Naive thymus-derived CD4-positive, alpha-beta T cell (primary cell): ENCODE measurements at regions of chr1 and their contacts with region 1.

Region 1: GRCh38 chr1:155466996-155467395 is 95.6 kb downstream of the ASH1L start:
- DNase-seq: no peak
- ATAC-seq: no peak
- H3K4me3 ChIP-seq: no peak overlapping the region
- H3K4me3 Mint-ChIP-seq: peak overlapping the region in 8 of 10 donors; percentile 3 to 65 (median 52)
- H3K27ac ChIP-seq: peak overlapping the region; percentile 41
- H3K27ac Mint-ChIP-seq: peak overlapping the region in 7 of 9 donors; percentile 36 to 90 (median 77)
- H3K4me1 ChIP-seq: peaks cover 8 to 14% of the 10 kb centered on the region in 2 donors
- H3K4me1 Mint-ChIP-seq: peaks cover 20 to 79% (median 61%) of the 10 kb centered on the region in 7 donors
- H3K27me3 ChIP-seq: no peaks in the 10 kb centered on the region
- H3K27me3 Mint-ChIP-seq: no peaks in the 10 kb centered on the region

Region 2: DNA sequence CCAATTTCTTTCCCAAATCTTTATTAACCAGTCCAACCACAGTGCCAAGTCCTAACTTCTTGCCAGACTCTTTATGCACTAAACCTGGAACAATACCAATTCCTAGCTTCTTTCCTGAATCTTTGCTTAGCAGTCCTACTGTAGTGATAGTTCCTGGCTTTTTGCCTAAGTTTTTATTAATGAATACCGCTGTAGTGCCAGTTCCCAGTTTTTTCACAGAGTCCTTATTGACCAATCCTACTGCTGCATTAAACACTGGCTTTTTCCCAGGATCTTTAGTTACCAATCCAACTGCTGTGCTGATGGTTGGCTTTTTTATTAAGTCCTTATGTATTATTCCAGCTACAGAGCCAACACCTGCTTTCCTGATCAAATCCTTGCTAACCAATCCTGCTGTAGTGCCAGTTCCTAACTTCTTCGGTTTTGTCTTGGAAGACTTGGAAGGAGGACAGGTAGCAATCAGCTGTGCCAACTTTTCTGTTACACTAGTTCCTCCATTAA is 14.8 kb after region 1 on chr1:
- CTCF ChIA-PET with region 1: no interaction called
- POLR2A ChIA-PET with region 1: interaction called, 3 read pairs
- intact Hi-C with region 1: loop called in 1 of 2 experiments (anchors 2 kb)
- DNase-seq: no peak
- ATAC-seq: no peak
- H3K4me3 ChIP-seq: no peak overlapping the region
- H3K4me3 Mint-ChIP-seq: no peak overlapping the region
- H3K27ac ChIP-seq: no peak overlapping the region
- H3K27ac Mint-ChIP-seq: peak overlapping the region in 1 of 9 donors; percentile 36
- H3K4me1 ChIP-seq: no peaks in the 10 kb centered on the region
- H3K4me1 Mint-ChIP-seq: peaks cover 12 to 40% (median 33%) of the 10 kb centered on the region in 7 donors
- H3K27me3 ChIP-seq: no peaks in the 10 kb centered on the region
- H3K27me3 Mint-ChIP-seq: no peaks in the 10 kb centered on the region